Posterior vena cava (tissue), 2 donors: ENCODE measurements at regions of chr4 and their contacts with region 1.

Region 1: GRCh38 chr4:71009890-71010588 is 16.6 kb downstream of the DCK start:
- DNase-seq: no peak

Region 2: GRCh38 chr4:70099206-70099605 is 910.8 kb before region 1 on chr4:
- intact Hi-C with region 1: no loop called
- DNase-seq: no peak

Region 3: GRCh38 chr4:70651864-70652506 is 358.1 kb before region 1 on chr4:
- intact Hi-C with region 1: loop called in 1 of 2 experiments (anchors 10 kb)
- DNase-seq: no peak